ENCODE measurements at regions of chr2 and their contacts with region 1.

Region 1: GRCh38 chr2:73071360-73072133 is at the start of gene SFXN5:
- DNase-seq: peak; percentile 93
- H3K4me3 Mint-ChIP-seq: peak within 1 kb of the TSS; percentile 84
- H3K27ac Mint-ChIP-seq: peak within 1 kb of the TSS; percentile 81
- H3K4me1 Mint-ChIP-seq: peaks cover 20% of the 10 kb centered on the region
- H3K27me3 Mint-ChIP-seq: peaks cover 7% of the 10 kb centered on the region
- total RNA-seq, gene SFXN5: 18.4 and 18.5 TPM in 2 replicates

Region 2: DNA sequence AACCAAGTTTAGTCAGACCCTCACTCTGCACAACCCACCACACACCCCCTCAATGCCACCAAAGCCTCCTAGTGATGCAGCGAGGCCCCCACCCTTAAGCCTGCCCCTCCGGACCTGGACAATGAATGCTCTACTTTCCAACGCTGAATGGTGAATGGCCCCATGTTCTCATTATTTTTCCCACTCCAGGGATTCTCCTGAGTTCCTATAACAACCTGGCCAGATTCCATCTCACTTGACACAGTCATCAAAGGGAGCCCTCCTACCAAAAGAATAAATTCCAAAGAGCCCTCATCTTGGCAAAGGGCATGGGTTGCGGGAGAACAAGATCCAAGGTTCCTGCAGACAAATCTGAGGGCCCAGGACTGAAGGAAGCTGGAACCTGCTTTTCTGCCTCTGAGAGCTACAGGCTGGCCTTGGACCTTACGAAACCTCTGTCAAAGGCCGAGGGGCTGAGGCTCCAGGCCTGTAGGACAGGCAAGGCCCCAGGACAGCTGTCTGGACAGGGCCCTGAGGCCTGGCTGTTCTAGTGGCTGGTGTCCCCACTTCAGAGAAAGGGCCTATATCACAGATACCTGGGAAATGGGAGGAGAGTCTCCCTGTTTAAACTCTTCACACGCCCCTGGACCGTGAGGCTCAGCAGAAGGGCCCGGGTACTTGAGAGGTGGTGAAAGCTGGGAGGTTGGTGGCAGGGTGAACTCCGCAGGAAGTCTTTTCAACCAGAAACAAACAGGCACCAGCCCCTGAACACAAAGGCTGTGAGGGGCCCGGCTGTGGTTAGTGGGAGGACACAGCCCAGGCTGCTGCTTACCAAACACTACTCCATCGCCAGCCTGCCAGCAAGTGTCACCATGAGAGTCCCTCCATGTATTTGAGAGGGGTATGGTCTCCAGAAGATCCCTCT is 27.4 kb before region 1 on chr2:
- intact Hi-C with region 1: no loop called
- DNase-seq: no peak
- H3K4me3 Mint-ChIP-seq: no peak overlapping the region
- H3K27ac Mint-ChIP-seq: no peak overlapping the region
- H3K4me1 Mint-ChIP-seq: no peaks in the 10 kb centered on the region
- H3K27me3 Mint-ChIP-seq: no peaks in the 10 kb centered on the region

Region 3: GRCh38 chr2:73112913-73113633 is 41.5 kb after region 1 on chr2 and contains the start of gene RAB11FIP5:
- intact Hi-C with region 1: loop called (anchors 2 kb)
- DNase-seq: peak; percentile 73
- H3K4me3 Mint-ChIP-seq: peak within 1 kb of the TSS; percentile 83
- H3K27ac Mint-ChIP-seq: peak within 1 kb of the TSS; percentile 46
- H3K4me1 Mint-ChIP-seq: peaks cover 21% of the 10 kb centered on the region
- H3K27me3 Mint-ChIP-seq: peaks cover 20% of the 10 kb centered on the region
- total RNA-seq, gene RAB11FIP5: 10.7 and 11.7 TPM in 2 replicates

Region 4: GRCh38 chr2:73187549-73187948 is 116.0 kb after region 1 on chr2:
- intact Hi-C with region 1: no loop called
- DNase-seq: no peak
- H3K4me3 Mint-ChIP-seq: no peak overlapping the region
- H3K27ac Mint-ChIP-seq: no peak overlapping the region
- H3K4me1 Mint-ChIP-seq: no peaks in the 10 kb centered on the region
- H3K27me3 Mint-ChIP-seq: peaks cover 21% of the 10 kb centered on the region

Region 5: GRCh38 chr2:73212448-73213176 is 141.1 kb after region 1 on chr2:
- intact Hi-C with region 1: loop called (anchors 2 kb)
- DNase-seq: peak; percentile 64
- H3K4me3 Mint-ChIP-seq: no peak overlapping the region
- H3K27ac Mint-ChIP-seq: no peak overlapping the region
- H3K4me1 Mint-ChIP-seq: peaks cover 26% of the 10 kb centered on the region
- H3K27me3 Mint-ChIP-seq: peaks cover 17% of the 10 kb centered on the region

Region 6: GRCh38 chr2:73284296-73285158 is 213.0 kb after region 1 on chr2 and contains the start of gene FBXO41:
- intact Hi-C with region 1: loop called (anchors 2 kb)
- DNase-seq: peak; percentile 68
- H3K4me3 Mint-ChIP-seq: peak within 1 kb of the TSS; percentile 78
- H3K27ac Mint-ChIP-seq: peak within 1 kb of the TSS; percentile 53
- H3K4me1 Mint-ChIP-seq: peaks cover 13% of the 10 kb centered on the region
- H3K27me3 Mint-ChIP-seq: peaks cover 26% of the 10 kb centered on the region
- total RNA-seq, gene FBXO41: 25.3 and 25.7 TPM in 2 replicates